ENCODE measurements at regions of chr4 and their contacts with region 1.

Region 1: GRCh38 chr4:145097821-145098674 is at the starts of genes ABCE1 and ANAPC10:
- DNase-seq: peak; percentile 99
- ATAC-seq: peak; percentile 95
- H3K4me3 ChIP-seq: peak within 1 kb of the TSS; percentile 60
- H3K27ac ChIP-seq: peak within 1 kb of the TSS; percentile 80
- H3K4me1 ChIP-seq: no peaks in the 10 kb centered on the region
- H3K27me3 ChIP-seq: no peaks in the 10 kb centered on the region
- CTCF ChIP-seq: peak; percentile 49
- POLR2A ChIP-seq: peak; percentile 82
- RAD21 ChIP-seq: peak; percentile 43
- total RNA-seq, gene ABCE1: 212 and 219 TPM in 2 replicates
- total RNA-seq, gene ANAPC10: 22.4 and 25.8 TPM in 2 replicates

Region 2: GRCh38 chr4:143531380-143531779 is 1566.7 kb before region 1 on chr4:
- CTCF ChIA-PET with region 1: no interaction called
- POLR2A ChIA-PET with region 1: no interaction called
- dilution Hi-C with region 1: no loop called
- in situ Hi-C with region 1: loop called (anchors 25 kb)
- intact Hi-C with region 1: no loop called
- DNase-seq: peak; percentile 5
- ATAC-seq: peak; percentile 69
- H3K4me3 ChIP-seq: no peak overlapping the region
- H3K27ac ChIP-seq: no peak overlapping the region
- H3K4me1 ChIP-seq: peaks cover 6% of the 10 kb centered on the region
- H3K27me3 ChIP-seq: no peaks in the 10 kb centered on the region
- CTCF ChIP-seq: 0 out of 2 replicates have a peak, but pooled peaks have one; percentile 23
- POLR2A ChIP-seq: no peak
- RAD21 ChIP-seq: no peak; the same call in 1 of the 2 replicates

Region 3: DNA sequence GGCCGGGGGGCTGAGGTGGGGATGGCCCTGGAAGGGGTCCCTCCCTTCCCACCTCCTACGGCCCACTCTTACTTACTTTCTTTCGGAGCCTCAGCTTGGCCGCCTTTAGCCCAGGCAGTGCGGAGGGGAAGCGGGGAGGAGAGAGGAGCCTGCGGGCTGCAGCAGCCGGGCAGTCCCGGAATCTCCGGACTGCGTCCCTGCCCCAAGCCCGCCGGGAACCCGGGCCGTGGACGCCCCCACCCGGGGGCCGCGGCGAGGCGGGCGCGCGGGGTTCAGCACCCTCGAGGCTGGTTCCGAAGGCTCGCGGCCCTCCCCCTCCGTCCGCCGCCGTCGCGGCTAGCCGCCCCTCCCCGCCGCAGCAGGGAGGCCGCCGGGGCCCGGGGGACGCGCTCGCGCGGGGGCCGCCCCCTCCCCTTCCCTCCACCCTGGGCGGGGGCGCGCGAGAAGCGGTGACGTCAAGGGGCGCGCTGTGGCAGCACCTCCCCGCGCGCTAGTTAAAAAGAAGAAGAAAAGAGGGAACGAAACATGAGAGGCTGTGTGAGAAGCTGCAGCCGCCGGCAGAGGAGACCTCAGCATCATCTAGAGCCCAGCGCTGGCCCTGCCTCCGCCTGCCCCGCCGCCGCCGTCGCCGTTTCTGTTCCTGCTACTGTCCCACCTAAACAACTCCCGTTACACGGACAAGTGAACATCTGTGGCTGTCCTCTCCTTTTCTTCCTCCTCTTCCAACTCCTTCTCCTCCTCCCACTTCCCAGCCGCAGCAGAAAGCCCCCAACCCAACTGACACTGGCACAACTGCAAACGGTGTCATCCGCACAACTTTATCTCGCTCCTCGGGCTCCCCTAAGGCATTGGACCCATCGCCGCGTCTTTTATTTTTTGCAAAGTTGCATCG is 452.2 kb before region 1 on chr4 and contains the start of gene HHIP:
- CTCF ChIA-PET with region 1: no interaction called
- POLR2A ChIA-PET with region 1: no interaction called
- dilution Hi-C with region 1: no loop called
- in situ Hi-C with region 1: no loop called
- intact Hi-C with region 1: loop called (anchors 10 kb)
- DNase-seq: peak; percentile 65
- ATAC-seq: peak; percentile 83
- H3K4me3 ChIP-seq: peak within 1 kb of the TSS; percentile 88
- H3K27ac ChIP-seq: peak within 1 kb of the TSS; percentile 10; the same call in 1 of the 2 replicates
- H3K4me1 ChIP-seq: peaks cover 7% of the 10 kb centered on the region
- H3K27me3 ChIP-seq: no peaks in the 10 kb centered on the region
- CTCF ChIP-seq: no peak
- POLR2A ChIP-seq: no peak
- RAD21 ChIP-seq: no peak
- total RNA-seq, gene HHIP: 6.6 and 8.6 TPM in 2 replicates